Ascending aorta (tissue), 2 donors: ENCODE measurements at regions of chr14 and their contacts with region 1.

Region 1: GRCh38 chr14:102096214-102097114 is 9.6 kb upstream of the HSP90AA1 start:
- DNase-seq: peak in 1 of 2 donors; percentile 92
- H3K4me3 ChIP-seq: no peak overlapping the region
- H3K27ac ChIP-seq: no peak overlapping the region
- H3K4me1 ChIP-seq: no peaks in the 10 kb centered on the region
- H3K27me3 ChIP-seq: no peaks in the 10 kb centered on the region
- CTCF ChIP-seq: peak; percentile 67 to 81 (median 70)

Region 2: DNA sequence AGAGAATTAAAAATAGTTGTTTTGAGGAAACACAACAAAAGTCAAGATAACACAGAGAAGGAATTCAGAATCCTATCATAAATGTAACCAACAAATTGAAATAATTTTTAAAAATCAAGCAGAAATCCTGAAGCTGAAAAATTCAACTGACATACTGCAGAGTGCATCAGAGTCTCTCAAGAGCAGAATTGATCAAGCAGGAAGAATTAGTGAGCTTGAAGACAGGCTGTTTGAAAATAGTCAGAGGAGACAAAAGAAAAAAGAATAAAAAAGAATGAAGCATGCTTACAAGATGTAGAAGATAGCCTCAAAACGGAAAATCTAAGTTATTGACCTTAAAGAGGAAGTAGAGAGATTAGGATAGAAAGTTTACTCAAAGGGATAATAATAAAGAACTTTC is 400.8 kb before region 1 on chr14:
- intact Hi-C with region 1: no loop called
- DNase-seq: no peak
- H3K4me3 ChIP-seq: no peak overlapping the region
- H3K27ac ChIP-seq: no peak overlapping the region
- H3K4me1 ChIP-seq: no peaks in the 10 kb centered on the region
- H3K27me3 ChIP-seq: no peaks in the 10 kb centered on the region
- CTCF ChIP-seq: no peak

Region 3: GRCh38 chr14:101707068-101707842 is 389.2 kb before region 1 on chr14:
- intact Hi-C with region 1: loop called (anchors 2 kb)
- DNase-seq: no peak
- H3K4me3 ChIP-seq: no peak overlapping the region
- H3K27ac ChIP-seq: no peak overlapping the region
- H3K4me1 ChIP-seq: peaks cover 6 to 7% of the 10 kb centered on the region in 2 donors
- H3K27me3 ChIP-seq: peaks cover 10% of the 10 kb centered on the region
- CTCF ChIP-seq: peak; percentile 73 to 82 (median 79)

Region 4: GRCh38 chr14:101917413-101918017 is 178.9 kb before region 1 on chr14:
- intact Hi-C with region 1: no loop called
- DNase-seq: no peak
- H3K4me3 ChIP-seq: no peak overlapping the region
- H3K27ac ChIP-seq: no peak overlapping the region
- H3K4me1 ChIP-seq: no peaks in the 10 kb centered on the region
- H3K27me3 ChIP-seq: no peaks in the 10 kb centered on the region
- CTCF ChIP-seq: no peak

Region 5: DNA sequence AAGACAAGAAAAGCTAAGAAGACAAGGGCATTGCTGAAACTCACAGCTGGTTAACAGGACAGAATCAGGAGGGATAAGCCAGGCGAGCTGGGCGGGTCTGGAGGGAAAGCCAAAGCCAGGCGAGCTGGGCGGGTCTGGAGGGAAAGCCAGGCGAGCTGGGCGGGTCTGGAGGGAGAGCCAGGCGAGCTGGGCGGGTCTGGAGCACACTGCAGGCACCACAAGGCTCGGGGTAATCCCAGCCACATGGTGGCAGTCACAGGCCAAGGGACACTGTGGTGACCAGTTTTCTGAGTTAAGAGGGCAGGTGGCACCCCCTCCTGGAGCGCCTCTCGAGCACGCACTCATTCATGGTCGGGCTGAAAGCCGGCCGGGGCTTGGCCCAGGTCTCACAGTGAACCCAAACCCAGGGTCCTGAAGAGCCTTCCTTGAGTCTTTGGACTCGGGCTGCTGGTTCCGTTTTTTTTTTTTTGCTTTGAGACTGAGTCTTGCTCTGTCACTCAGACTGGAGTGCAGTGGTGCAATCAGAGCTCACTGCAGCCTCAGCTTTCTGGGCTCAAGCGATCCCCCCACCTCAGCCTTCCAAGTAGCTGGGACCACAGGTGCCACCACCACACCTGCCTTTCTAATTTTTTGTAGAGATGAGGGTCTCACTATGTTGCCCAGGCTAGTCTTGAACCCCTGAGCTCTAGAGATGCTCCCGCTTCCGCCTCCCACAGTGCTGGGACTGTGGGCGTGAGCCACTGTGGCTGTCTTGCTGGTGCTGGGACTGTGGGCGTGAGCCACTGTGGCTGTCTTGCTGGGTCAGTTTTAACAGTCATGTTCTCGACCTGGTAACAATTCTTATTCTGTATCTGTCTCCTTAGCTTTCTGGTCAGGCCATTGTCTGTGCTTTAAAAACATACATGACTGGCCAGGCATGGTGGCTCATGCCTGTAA is 49.9 kb before region 1 on chr14:
- intact Hi-C with region 1: loop called (anchors 1 kb)
- DNase-seq: peak; percentile 41 to 90
- H3K4me3 ChIP-seq: no peak overlapping the region
- H3K27ac ChIP-seq: peak overlapping the region in 1 of 2 donors; percentile 47
- H3K4me1 ChIP-seq: peaks cover 0 to 3% of the 10 kb centered on the region in 2 donors
- H3K27me3 ChIP-seq: no peaks in the 10 kb centered on the region
- CTCF ChIP-seq: peak; percentile 54 to 68 (median 56)

Region 6: DNA sequence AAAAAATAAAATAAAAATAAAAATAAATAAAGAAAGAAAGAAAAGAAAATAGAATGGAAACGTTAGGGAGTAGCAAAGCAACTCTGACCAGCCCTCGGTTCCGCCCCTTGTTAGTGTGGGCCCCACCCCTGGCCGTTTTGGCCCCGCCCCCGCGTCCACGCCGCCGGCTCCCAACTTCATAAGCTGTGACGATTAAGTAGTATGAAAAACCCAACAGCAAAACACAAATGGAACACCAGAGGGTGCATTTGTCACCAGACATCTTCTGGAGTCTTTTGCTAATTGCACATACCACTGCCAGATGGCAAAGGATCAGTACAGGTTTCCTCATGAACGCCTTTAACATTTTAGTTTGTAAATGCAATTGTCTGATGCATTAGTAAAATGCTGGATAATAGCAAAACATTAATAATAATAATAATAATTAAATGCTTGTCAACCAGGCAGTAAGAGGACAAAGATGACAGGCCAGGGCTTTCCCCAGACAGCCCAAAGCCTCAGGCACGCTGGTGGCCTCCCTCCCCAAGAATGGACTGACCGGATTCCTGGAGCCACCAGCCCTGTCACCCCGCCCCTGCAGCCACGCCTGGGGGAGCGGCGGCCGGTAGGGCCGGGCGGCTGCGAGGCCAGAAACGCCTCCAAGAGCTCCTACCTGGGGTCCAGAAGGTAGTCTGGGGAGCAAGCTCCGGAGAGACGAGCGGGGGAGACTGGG is 33.2 kb before region 1 on chr14:
- intact Hi-C with region 1: loop called (anchors 1 kb)
- DNase-seq: peak; percentile 54 to 91
- H3K4me3 ChIP-seq: no peak overlapping the region
- H3K27ac ChIP-seq: peak overlapping the region in 1 of 2 donors; percentile 2
- H3K4me1 ChIP-seq: peaks cover 0 to 5% of the 10 kb centered on the region in 2 donors
- H3K27me3 ChIP-seq: no peaks in the 10 kb centered on the region
- CTCF ChIP-seq: peak; percentile 25 to 46 (median 45)